Right cardiac atrium (tissue), 5 donors: ENCODE measurements at regions of chr9 and their contacts with region 1.

Region 1: DNA sequence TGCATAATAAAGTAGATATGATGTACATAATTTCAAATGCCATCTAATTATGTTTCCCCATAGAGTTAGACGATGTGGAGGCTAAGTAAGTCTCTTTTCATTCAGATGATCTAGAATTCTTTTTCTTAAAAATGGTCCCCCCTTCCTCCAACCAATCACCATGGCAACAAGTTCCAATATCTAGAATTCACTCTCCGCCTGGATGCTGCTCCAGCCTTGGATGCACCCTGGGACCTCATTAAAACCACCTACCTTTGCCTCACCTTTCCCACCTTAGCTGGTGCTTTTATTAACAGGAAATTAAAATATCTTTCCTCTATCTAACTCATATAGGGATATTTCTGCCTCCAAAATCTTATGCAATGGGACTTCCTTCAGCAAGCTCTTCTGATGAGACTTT is 49.0 kb downstream of the DIRAS2 start:
- DNase-seq: no peak
- ATAC-seq: no peak
- H3K4me3 ChIP-seq: no peak overlapping the region
- H3K27ac ChIP-seq: no peak overlapping the region
- H3K4me1 ChIP-seq: no peaks in the 10 kb centered on the region
- H3K27me3 ChIP-seq: no peaks in the 10 kb centered on the region

Region 2: DNA sequence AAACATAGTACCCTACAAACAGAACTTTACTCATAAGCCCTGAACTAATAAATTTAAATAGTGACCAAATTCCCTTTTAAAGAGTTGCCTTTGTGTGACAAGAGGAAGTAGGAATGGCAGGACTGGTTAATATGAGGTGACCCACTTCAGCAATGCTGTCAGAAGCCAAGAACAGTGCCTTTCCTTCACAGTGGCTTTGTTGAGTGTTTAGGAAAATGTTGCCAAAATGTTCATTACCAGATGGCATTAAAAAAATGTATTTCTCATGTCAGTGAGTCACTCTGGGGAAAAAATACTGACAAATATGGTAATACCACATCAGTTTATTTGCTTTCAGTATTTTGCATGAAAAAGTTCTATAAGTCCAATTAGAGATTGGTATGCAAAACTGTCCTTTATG is 54.3 kb before region 1 on chr9:
- intact Hi-C with region 1: loop called in 1 of 4 experiments (anchors 10 kb)
- DNase-seq: no peak
- ATAC-seq: no peak
- H3K4me3 ChIP-seq: no peak overlapping the region
- H3K27ac ChIP-seq: no peak overlapping the region
- H3K4me1 ChIP-seq: no peaks in the 10 kb centered on the region
- H3K27me3 ChIP-seq: no peaks in the 10 kb centered on the region

Region 3: GRCh38 chr9:90642570-90643539 is 49.2 kb after region 1 on chr9 and contains the start of gene DIRAS2:
- intact Hi-C with region 1: no loop called
- DNase-seq: peak; percentile 25 to 64 (median 60)
- ATAC-seq: peak; percentile 85 to 90
- H3K4me3 ChIP-seq: peak within 1 kb of the TSS; percentile 27
- H3K27ac ChIP-seq: no peak within 1 kb of the TSS
- H3K4me1 ChIP-seq: no peaks in the 10 kb centered on the region
- H3K27me3 ChIP-seq: no peaks in the 10 kb centered on the region
- total RNA-seq, gene DIRAS2: not detected

Region 4: GRCh38 chr9:90706230-90706629 is 112.6 kb after region 1 on chr9:
- intact Hi-C with region 1: no loop called
- DNase-seq: no peak
- ATAC-seq: no peak
- H3K4me3 ChIP-seq: no peak overlapping the region
- H3K27ac ChIP-seq: no peak overlapping the region
- H3K4me1 ChIP-seq: no peaks in the 10 kb centered on the region
- H3K27me3 ChIP-seq: peaks cover 2% of the 10 kb centered on the region